Tibial artery (tissue), 4 donors: ENCODE measurements at regions of chr17 and their contacts with region 1.

Region 1: GRCh38 chr17:52110923-52111581 is 47.5 kb downstream of the CA10 start:
- DNase-seq: no peak
- H3K4me3 ChIP-seq: no peak overlapping the region
- H3K27ac ChIP-seq: no peak overlapping the region
- H3K4me1 ChIP-seq: no peaks in the 10 kb centered on the region
- H3K27me3 ChIP-seq: no peaks in the 10 kb centered on the region
- CTCF ChIP-seq: no peak

Region 2: GRCh38 chr17:51629232-51629631 is 481.8 kb before region 1 on chr17:
- intact Hi-C with region 1: loop called (anchors 10 kb)
- DNase-seq: no peak
- H3K4me3 ChIP-seq: no peak overlapping the region
- H3K27ac ChIP-seq: no peak overlapping the region
- H3K4me1 ChIP-seq: no peaks in the 10 kb centered on the region
- H3K27me3 ChIP-seq: no peaks in the 10 kb centered on the region
- CTCF ChIP-seq: no peak

Region 3: DNA sequence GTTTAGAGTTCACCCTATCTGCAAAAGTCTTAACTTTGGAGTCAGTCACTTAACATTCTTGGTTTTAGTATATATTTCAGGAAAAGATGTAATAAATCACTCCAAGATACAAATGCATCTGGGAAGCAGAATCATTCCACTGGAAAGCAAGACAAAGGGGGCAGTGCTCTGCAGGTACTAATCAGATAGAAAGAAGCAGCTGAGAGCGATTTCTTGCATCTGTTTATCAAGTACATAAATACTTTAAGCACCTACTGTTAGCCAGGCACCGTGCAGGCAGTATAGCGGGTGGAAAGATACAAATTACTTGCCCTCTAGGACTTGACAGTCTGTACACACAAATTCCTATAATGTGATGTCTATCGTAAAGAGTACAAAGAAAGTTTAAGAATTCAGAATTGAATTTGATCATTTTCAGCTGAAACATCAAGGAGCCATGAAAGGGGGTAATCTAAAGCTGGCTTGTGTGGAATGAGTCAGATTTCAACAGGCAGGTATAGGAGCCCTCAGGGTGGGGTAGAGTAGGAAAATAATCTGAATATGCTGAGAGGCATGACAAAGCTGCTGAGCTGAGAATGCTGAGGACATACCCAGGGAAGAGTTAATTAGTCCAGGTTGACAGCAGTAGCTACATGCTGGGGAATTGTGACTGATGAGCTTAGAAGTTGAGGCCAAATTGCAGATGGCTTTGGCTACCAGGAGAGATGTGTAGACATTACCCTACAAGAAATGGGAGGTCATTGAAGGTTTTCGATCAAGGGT is 62.7 kb before region 1 on chr17:
- intact Hi-C with region 1: no loop called
- DNase-seq: no peak
- H3K4me3 ChIP-seq: no peak overlapping the region
- H3K27ac ChIP-seq: no peak overlapping the region
- H3K4me1 ChIP-seq: no peaks in the 10 kb centered on the region
- H3K27me3 ChIP-seq: no peaks in the 10 kb centered on the region
- CTCF ChIP-seq: no peak

Region 4: DNA sequence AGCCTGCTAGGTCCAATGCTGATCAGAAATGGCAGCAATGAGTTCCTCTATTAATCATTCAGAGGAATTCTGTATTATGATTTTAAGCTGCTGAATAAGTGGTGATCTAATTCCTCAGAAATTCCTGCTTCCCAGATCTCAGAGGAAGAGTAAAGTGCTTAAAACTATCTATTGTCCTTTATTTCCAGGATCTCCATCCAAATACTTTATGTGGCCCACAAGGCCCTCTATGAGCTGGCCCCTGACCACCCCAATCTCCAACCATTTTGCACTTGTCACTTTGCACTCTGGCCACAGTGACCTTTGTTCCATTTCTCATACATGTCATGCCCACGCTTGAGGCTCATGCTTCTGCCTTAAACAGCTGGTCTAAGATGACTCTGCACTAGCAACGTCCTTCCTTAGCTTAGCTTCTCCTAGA is 46.3 kb before region 1 on chr17:
- intact Hi-C with region 1: loop called (anchors 10 kb)
- DNase-seq: no peak
- H3K4me3 ChIP-seq: no peak overlapping the region
- H3K27ac ChIP-seq: no peak overlapping the region
- H3K4me1 ChIP-seq: no peaks in the 10 kb centered on the region
- H3K27me3 ChIP-seq: no peaks in the 10 kb centered on the region
- CTCF ChIP-seq: no peak